GM12878 (cell line): ENCODE measurements at regions of chr12 and their contacts with region 1.

Region 1: GRCh38 chr12:104659058-104659457 is 202.3 kb downstream of the CHST11 start:
- DNase-seq: no peak
- ATAC-seq: no peak
- H3K4me3 ChIP-seq: no peak overlapping the region
- H3K27ac ChIP-seq: no peak overlapping the region
- H3K4me1 ChIP-seq: peaks cover 4% of the 10 kb centered on the region
- H3K27me3 ChIP-seq: no peaks in the 10 kb centered on the region
- CTCF ChIP-seq: no peak
- EP300 ChIP-seq: no peak
- POLR2A ChIP-seq: no peak
- RAD21 ChIP-seq: no peak

Region 2: GRCh38 chr12:103751171-103751570 is 907.9 kb before region 1 on chr12:
- CTCF ChIA-PET with region 1: no interaction called
- POLR2A ChIA-PET with region 1: no interaction called
- RAD21 ChIA-PET with region 1: no interaction called
- SMC1A ChIA-PET with region 1: no interaction called
- in situ Hi-C with region 1: no loop called
- intact Hi-C with region 1: no loop called
- DNase-seq: no peak
- ATAC-seq: peak; percentile 60
- H3K4me3 ChIP-seq: no peak overlapping the region
- H3K27ac ChIP-seq: no peak overlapping the region
- H3K4me1 ChIP-seq: no peaks in the 10 kb centered on the region
- H3K27me3 ChIP-seq: no peaks in the 10 kb centered on the region
- CTCF ChIP-seq: peak; percentile 3 to 41 (median 28); a peak in 2 of 6 replicates
- EP300 ChIP-seq: no peak
- POLR2A ChIP-seq: no peak
- RAD21 ChIP-seq: 0 out of 2 replicates have a peak, but pooled peaks have one; percentile 14

Region 3: GRCh38 chr12:104641862-104642261 is 17.2 kb before region 1 on chr12:
- CTCF ChIA-PET with region 1: interaction called, 5 read pairs
- POLR2A ChIA-PET with region 1: no interaction called
- RAD21 ChIA-PET with region 1: interaction called, 3 read pairs
- SMC1A ChIA-PET with region 1: interaction called, 12 read pairs
- in situ Hi-C with region 1: no loop called
- intact Hi-C with region 1: no loop called
- DNase-seq: peak; percentile 79
- ATAC-seq: peak; percentile 92
- H3K4me3 ChIP-seq: no peak overlapping the region
- H3K27ac ChIP-seq: peak overlapping the region; percentile 78
- H3K4me1 ChIP-seq: peaks cover 43% of the 10 kb centered on the region
- H3K27me3 ChIP-seq: no peaks in the 10 kb centered on the region
- CTCF ChIP-seq: peak; percentile 37 to 65 (median 50); a peak in 5 of 6 replicates
- EP300 ChIP-seq: peak; percentile 99
- POLR2A ChIP-seq: no peak
- RAD21 ChIP-seq: peak; percentile 65